Activated naive CD4-positive, alpha-beta T cell treated with anti-CD3 and anti-CD28 coated beads for 36 hours (primary cell): ENCODE measurements at regions of chr9 and their contacts with region 1.

Region 1: DNA sequence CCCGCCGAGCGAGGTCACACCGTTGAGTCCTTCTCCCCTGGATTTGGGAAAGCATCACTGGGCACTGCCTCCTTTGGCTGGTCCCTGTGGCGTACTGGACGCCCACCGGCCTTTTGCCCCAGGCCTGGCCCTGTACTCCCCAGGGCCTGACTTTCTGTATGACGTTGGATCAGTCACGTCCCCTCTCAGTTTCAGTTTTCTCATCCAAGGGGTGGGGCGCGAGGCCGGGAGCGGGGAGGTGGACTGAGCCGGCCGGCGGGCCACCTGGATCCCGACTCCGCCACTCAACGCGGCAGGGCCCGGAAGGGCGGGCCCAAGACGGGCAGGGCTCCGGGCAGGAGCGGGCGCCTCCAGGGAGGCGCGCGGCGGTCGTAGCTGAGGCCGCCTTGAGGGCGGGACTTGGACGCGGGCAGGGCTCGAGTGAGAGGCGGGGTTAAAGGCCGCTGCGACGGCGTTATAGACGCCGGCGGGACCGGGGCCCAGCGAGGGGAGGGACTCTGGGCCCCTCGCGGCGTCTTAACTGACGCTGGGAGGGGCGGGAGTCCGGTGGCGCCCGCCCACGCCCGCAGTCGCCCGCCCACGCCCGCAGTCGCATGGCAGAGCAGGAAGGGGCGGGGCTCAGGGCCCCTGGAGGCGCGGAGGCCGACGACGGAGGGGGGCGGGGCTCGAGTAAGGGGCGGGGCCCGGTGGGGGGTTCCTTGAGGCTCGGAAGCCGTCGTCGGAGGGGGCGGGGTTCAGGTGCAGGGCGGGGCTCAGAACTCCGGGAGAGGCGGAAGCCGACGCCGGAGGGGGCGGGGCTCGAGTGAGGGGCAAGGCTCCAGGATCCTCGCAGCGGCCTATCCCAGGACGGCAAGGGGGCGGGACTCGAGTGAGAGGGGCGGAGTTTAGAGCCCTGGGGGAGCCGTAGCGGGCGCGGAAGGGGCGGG is 549 bp upstream of the CARD19 start:
- DNase-seq: peak; percentile 100
- H3K4me3 Mint-ChIP-seq: peak overlapping the region; percentile 84
- H3K27ac Mint-ChIP-seq: peak overlapping the region; percentile 95
- H3K4me1 Mint-ChIP-seq: peaks cover 74% of the 10 kb centered on the region
- H3K27me3 Mint-ChIP-seq: no peaks in the 10 kb centered on the region

Region 2: DNA sequence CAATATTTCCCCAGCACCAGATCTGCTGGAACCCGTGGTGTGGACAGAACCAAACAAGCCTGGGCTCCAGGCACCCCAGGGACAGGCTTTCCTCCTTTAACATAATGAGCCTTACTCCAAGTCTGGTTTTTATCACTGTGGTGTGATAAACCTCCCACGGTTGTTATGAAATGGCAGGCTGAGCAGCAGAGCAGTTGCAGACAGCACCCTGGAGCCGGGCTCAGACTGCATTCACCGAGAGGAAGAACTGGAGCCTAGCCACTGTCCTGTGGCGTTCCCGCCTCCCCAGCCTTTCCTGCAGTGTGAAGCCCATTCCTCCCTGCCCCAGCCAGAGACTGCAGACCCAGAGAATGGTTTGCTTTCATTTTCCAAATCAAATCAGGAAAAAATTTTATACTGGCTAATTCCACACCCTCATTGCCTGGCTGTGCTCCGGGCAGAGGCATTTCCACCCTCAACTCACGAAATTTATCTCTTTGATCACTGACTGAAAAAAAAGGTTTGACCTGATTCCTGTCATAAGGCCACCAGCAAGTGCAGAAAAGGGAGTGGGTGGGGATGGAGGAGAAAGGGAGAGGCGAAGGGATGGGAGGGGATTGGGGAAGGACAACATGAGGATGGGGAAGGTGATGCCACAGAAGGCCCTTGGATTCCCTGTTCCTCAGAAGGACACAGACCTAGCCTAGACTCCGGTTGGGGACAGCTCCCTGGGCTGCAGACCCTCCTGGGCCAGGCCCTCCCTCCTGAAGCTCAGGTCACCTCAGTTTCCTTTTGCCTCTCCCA is 444.4 kb before region 1 on chr9:
- CTCF ChIA-PET with region 1: no interaction called
- intact Hi-C with region 1: no loop called
- DNase-seq: no peak
- H3K4me3 Mint-ChIP-seq: no peak overlapping the region
- H3K27ac Mint-ChIP-seq: no peak overlapping the region
- H3K4me1 Mint-ChIP-seq: peaks cover 4% of the 10 kb centered on the region
- H3K27me3 Mint-ChIP-seq: no peaks in the 10 kb centered on the region

Region 3: GRCh38 chr9:92954049-92954861 is 141.2 kb before region 1 on chr9:
- CTCF ChIA-PET with region 1: interaction called, 3 read pairs
- intact Hi-C with region 1: loop called (anchors 2 kb)
- DNase-seq: peak; percentile 95
- H3K4me3 Mint-ChIP-seq: peak overlapping the region; percentile 60
- H3K27ac Mint-ChIP-seq: peak overlapping the region; percentile 91
- H3K4me1 Mint-ChIP-seq: peaks cover 75% of the 10 kb centered on the region
- H3K27me3 Mint-ChIP-seq: no peaks in the 10 kb centered on the region

Region 4: GRCh38 chr9:93028448-93029006 is 66.9 kb before region 1 on chr9:
- CTCF ChIA-PET with region 1: no interaction called
- intact Hi-C with region 1: loop called (anchors 1 kb)
- DNase-seq: peak; percentile 90
- H3K4me3 Mint-ChIP-seq: peak overlapping the region; percentile 55
- H3K27ac Mint-ChIP-seq: peak overlapping the region; percentile 97
- H3K4me1 Mint-ChIP-seq: peaks cover 87% of the 10 kb centered on the region
- H3K27me3 Mint-ChIP-seq: no peaks in the 10 kb centered on the region

Region 5: GRCh38 chr9:93082841-93083411 is 12.5 kb before region 1 on chr9:
- CTCF ChIA-PET with region 1: no interaction called
- intact Hi-C with region 1: loop called (anchors 1 kb)
- DNase-seq: peak; percentile 49
- H3K4me3 Mint-ChIP-seq: no peak overlapping the region
- H3K27ac Mint-ChIP-seq: peak overlapping the region; percentile 95
- H3K4me1 Mint-ChIP-seq: peaks cover 40% of the 10 kb centered on the region
- H3K27me3 Mint-ChIP-seq: no peaks in the 10 kb centered on the region

Region 6: DNA sequence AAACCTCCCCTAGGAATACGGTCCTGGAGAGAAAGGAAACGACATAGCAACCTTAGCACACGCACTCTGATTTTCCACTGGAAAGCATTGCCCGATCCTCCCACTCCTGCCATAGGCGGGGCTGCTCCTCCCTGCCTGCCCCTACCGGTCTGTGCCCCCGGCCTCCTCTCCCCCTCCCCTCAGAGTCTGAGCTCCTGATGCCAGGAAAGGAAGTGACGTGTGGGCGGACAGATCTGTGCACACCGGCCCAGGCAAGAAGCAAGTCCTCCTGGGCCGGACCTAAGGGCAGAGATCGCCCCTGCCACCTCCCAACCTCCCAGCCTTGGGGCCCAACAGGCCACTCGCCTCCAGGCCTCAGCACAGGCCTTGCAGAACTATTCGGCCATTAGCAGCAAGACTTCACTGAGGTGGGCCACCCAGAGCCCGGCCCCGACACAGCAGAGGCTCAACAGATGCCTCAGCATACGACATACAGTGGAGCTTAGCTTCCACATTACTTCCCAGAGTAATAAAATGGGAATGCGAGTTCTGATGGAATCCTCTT is 31.4 kb after region 1 on chr9:
- CTCF ChIA-PET with region 1: no interaction called
- intact Hi-C with region 1: no loop called
- DNase-seq: peak; percentile 68
- H3K4me3 Mint-ChIP-seq: peak overlapping the region; percentile 56
- H3K27ac Mint-ChIP-seq: peak overlapping the region; percentile 85
- H3K4me1 Mint-ChIP-seq: peaks cover 61% of the 10 kb centered on the region
- H3K27me3 Mint-ChIP-seq: no peaks in the 10 kb centered on the region

Region 7: GRCh38 chr9:93143830-93144530 is 48.5 kb after region 1 on chr9:
- CTCF ChIA-PET with region 1: no interaction called
- intact Hi-C with region 1: loop called (anchors 2 kb)
- DNase-seq: peak; percentile 67
- H3K4me3 Mint-ChIP-seq: no peak overlapping the region
- H3K27ac Mint-ChIP-seq: peak overlapping the region; percentile 79
- H3K4me1 Mint-ChIP-seq: peaks cover 68% of the 10 kb centered on the region
- H3K27me3 Mint-ChIP-seq: no peaks in the 10 kb centered on the region

Region 8: GRCh38 chr9:93159601-93160471 is 64.4 kb after region 1 on chr9:
- CTCF ChIA-PET with region 1: no interaction called
- intact Hi-C with region 1: no loop called
- DNase-seq: peak; percentile 76
- H3K4me3 Mint-ChIP-seq: no peak overlapping the region
- H3K27ac Mint-ChIP-seq: peak overlapping the region; percentile 22
- H3K4me1 Mint-ChIP-seq: peaks cover 20% of the 10 kb centered on the region
- H3K27me3 Mint-ChIP-seq: no peaks in the 10 kb centered on the region

Region 9: DNA sequence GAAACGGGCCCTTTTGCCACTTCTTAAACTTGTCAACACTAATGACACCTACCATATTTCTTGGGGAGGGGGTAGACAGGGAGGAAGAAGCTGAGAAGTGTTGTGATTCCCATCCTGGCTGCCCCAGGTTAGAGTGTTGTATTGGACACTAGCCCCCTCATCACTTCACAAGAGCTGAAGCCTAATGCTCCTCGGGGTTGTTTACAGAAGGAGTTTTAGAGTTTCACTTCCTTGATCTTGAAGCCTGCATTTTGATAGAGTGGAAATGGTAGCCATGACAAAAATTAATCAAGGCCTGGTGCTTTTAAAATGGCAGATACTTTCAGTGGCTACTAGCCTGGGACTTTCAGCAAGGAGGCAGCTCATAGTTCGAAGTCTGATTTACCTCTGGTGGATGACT is 368.9 kb after region 1 on chr9:
- CTCF ChIA-PET with region 1: no interaction called
- intact Hi-C with region 1: no loop called
- DNase-seq: no peak
- H3K4me3 Mint-ChIP-seq: no peak overlapping the region
- H3K27ac Mint-ChIP-seq: peak overlapping the region; percentile 26
- H3K4me1 Mint-ChIP-seq: peaks cover 84% of the 10 kb centered on the region
- H3K27me3 Mint-ChIP-seq: no peaks in the 10 kb centered on the region